Endothelial cell of umbilical vein (primary cell): ENCODE measurements at regions of chr19 and their contacts with region 1.

Region 1: DNA sequence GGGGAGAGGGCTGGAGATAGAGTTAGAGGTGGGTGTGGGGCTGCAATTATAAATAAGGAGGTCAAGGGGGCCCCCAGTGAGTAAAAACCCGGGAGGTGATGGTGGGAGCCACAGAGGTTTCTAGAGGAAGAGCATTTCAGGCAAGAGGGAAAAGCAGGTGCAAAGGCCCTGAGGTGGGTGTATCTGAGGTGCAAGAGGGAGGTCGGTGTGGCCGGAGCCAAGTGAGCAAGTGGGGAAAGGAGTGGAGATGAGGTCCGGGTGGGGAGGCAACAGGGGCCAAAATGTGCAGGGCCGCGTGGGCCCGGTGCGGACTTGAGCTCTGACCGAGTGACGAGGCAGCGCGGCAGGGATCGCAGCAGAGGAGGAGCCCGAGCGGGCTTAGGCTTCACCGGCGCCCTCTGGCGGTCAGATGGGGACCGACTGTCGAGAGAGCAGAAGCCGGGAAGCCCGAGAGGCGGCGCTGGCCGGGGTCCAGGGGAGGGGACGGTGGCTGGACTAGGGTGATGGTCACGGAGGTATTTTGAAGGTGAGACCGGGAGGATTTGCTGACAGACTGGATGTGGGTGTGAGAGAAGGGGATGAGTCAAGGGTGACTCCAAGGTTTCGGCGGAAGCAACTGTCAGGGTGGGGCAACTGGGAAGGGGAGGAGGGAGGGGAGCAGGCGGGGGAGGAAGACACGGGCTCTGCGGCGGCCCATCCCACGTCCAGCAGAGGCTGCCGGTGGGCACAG is 17.7 kb upstream of the SPACA4 start:
- DNase-seq: peak; percentile 74
- H3K4me3 ChIP-seq: peak overlapping the region in 1 of 3 experiments; percentile 3
- H3K27ac ChIP-seq: no peak overlapping the region
- H3K4me1 ChIP-seq: no peaks in the 10 kb centered on the region
- H3K27me3 ChIP-seq: no peaks in the 10 kb centered on the region
- CTCF ChIP-seq: peak; percentile 97 to 98
- POLR2A ChIP-seq: no peak

Region 2: GRCh38 chr19:48315712-48316111 is 273.1 kb before region 1 on chr19:
- CTCF ChIA-PET with region 1: interaction called, 16 read pairs
- POLR2A ChIA-PET with region 1: no interaction called
- dilution Hi-C with region 1: no loop called
- intact Hi-C with region 1: loop called (anchors 1 kb)
- DNase-seq: no peak
- H3K4me3 ChIP-seq: no peak overlapping the region
- H3K27ac ChIP-seq: no peak overlapping the region
- H3K4me1 ChIP-seq: peaks cover 12% of the 10 kb centered on the region
- H3K27me3 ChIP-seq: no peaks in the 10 kb centered on the region
- CTCF ChIP-seq: no peak
- POLR2A ChIP-seq: no peak

Region 3: GRCh38 chr19:48351341-48351752 is 237.5 kb before region 1 on chr19:
- CTCF ChIA-PET with region 1: interaction called, 15 read pairs
- POLR2A ChIA-PET with region 1: no interaction called
- dilution Hi-C with region 1: no loop called
- intact Hi-C with region 1: no loop called
- DNase-seq: peak; percentile 57
- H3K4me3 ChIP-seq: no peak overlapping the region
- H3K27ac ChIP-seq: no peak overlapping the region
- H3K4me1 ChIP-seq: no peaks in the 10 kb centered on the region
- H3K27me3 ChIP-seq: no peaks in the 10 kb centered on the region
- CTCF ChIP-seq: peak; percentile 82 to 90
- POLR2A ChIP-seq: no peak

Region 4: GRCh38 chr19:48445606-48446481 is 143.0 kb before region 1 on chr19 and contains the start of gene GRWD1:
- CTCF ChIA-PET with region 1: interaction called, 21 read pairs
- POLR2A ChIA-PET with region 1: no interaction called
- dilution Hi-C with region 1: no loop called
- intact Hi-C with region 1: loop called (anchors 1 kb)
- DNase-seq: peak; percentile 97
- H3K4me3 ChIP-seq: peak within 1 kb of the TSS; percentile 85 to 97 (median 86)
- H3K27ac ChIP-seq: peak within 1 kb of the TSS; percentile 52
- H3K4me1 ChIP-seq: peaks cover 17% of the 10 kb centered on the region
- H3K27me3 ChIP-seq: peaks cover 7 to 19% of the 10 kb centered on the region in 2 experiments
- CTCF ChIP-seq: no peak
- POLR2A ChIP-seq: peak; percentile 71
- total RNA-seq, gene GRWD1: 52.7 and 52.8 TPM in 2 replicates

Region 5: GRCh38 chr19:48506138-48506733 is 82.6 kb before region 1 on chr19:
- CTCF ChIA-PET with region 1: interaction called, 507 read pairs
- POLR2A ChIA-PET with region 1: interaction called, 3 read pairs
- dilution Hi-C with region 1: no loop called
- intact Hi-C with region 1: loop called (anchors 1 kb)
- DNase-seq: no peak
- H3K4me3 ChIP-seq: no peak overlapping the region
- H3K27ac ChIP-seq: no peak overlapping the region
- H3K4me1 ChIP-seq: no peaks in the 10 kb centered on the region
- H3K27me3 ChIP-seq: peaks cover 0 to 4% of the 10 kb centered on the region in 2 experiments
- CTCF ChIP-seq: peak; percentile 30 to 35
- POLR2A ChIP-seq: no peak

Region 6: GRCh38 chr19:48558018-48558684 is 30.7 kb before region 1 on chr19:
- CTCF ChIA-PET with region 1: interaction called, 13 read pairs
- POLR2A ChIA-PET with region 1: no interaction called
- dilution Hi-C with region 1: no loop called
- intact Hi-C with region 1: no loop called
- DNase-seq: no peak
- H3K4me3 ChIP-seq: no peak overlapping the region
- H3K27ac ChIP-seq: no peak overlapping the region
- H3K4me1 ChIP-seq: peaks cover 5% of the 10 kb centered on the region
- H3K27me3 ChIP-seq: no peaks in the 10 kb centered on the region
- CTCF ChIP-seq: no peak
- POLR2A ChIP-seq: no peak

Region 7: DNA sequence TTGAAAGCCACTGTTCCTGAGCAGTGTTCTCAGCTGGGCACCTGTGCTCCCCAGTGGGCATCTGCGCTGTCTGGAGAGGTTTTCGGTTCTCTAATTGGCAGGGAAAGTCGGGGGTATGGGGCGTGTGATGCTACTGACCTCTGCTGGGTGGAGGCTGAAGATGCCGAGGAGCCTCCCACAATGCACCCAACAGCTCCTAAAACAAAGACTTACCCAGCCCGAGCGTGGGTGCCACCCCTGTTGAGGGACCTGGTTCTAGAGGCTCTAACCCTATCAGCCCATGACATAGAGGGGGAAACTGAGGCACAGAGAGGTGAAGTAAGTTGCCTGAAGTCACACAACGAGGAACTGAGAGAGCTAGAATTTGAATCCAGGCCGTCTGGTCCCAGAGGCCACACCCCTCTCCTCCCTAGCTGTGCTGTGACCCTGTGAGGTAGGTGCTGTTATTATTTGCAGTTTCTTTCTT is 20.0 kb after region 1 on chr19:
- CTCF ChIA-PET with region 1: interaction called, 16 read pairs
- POLR2A ChIA-PET with region 1: no interaction called
- dilution Hi-C with region 1: no loop called
- intact Hi-C with region 1: no loop called
- DNase-seq: no peak
- H3K4me3 ChIP-seq: no peak overlapping the region
- H3K27ac ChIP-seq: no peak overlapping the region
- H3K4me1 ChIP-seq: no peaks in the 10 kb centered on the region
- H3K27me3 ChIP-seq: no peaks in the 10 kb centered on the region
- CTCF ChIP-seq: peak; percentile 39 to 41
- POLR2A ChIP-seq: no peak